CD8-positive, alpha-beta T cell (primary cell): ENCODE measurements at regions of chr5 and their contacts with region 1.

Region 1: GRCh38 chr5:168579488-168580226 is 489 bp upstream of the PANK3 start:
- DNase-seq: peak; percentile 94 to 99 (median 97)
- ATAC-seq: peak; percentile 97
- H3K4me3 ChIP-seq: peak overlapping the region; percentile 60 to 74
- H3K4me3 Mint-ChIP-seq: peak overlapping the region; percentile 89
- H3K27ac ChIP-seq: peak overlapping the region; percentile 45 to 96
- H3K27ac Mint-ChIP-seq: peak overlapping the region; percentile 96
- H3K4me1 ChIP-seq: peaks cover 26% of the 10 kb centered on the region
- H3K4me1 Mint-ChIP-seq: peaks cover 41% of the 10 kb centered on the region
- H3K27me3 ChIP-seq: no peaks in the 10 kb centered on the region
- H3K27me3 Mint-ChIP-seq: peaks cover 2% of the 10 kb centered on the region
- CTCF ChIP-seq: no peak

Region 2: DNA sequence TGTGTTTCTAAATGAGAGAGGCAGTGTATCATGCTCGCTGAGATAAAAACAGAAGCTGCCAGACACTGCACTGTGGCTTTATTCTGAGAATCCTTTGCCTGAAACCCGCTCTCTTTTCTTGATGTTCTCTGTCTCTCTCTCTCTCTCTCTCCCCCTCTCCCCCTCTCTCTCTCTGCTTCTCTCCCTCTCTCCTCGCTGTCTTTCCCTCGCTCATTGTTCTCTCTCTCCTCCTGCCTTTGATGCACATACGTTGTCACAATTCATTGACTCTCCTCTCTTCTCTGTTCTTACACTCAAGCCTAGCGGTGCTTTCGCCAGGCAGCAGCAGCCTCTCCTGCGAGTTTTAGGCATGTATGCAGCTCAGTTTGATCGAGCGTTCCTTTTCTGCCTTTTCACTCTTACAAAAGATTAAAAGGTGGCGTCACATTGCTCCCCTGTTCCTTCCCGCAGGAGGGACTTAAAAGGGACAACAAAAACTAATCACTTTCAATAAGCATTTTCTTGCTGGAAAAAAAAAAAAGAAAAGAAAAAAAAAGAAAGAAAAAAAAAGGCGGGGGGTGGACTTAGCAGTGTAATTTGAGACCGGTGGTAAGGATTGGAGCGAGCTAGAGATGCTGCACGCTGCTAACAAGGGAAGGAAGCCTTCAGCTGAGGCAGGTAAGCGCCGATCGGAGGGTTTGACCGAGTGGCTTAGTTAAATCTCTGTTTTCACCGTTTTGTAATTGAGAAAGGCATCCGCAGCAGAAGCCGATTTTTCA is 1006.1 kb before region 1 on chr5:
- CTCF ChIA-PET with region 1: no interaction called
- POLR2A ChIA-PET with region 1: no interaction called
- intact Hi-C with region 1: no loop called
- DNase-seq: no peak
- ATAC-seq: no peak
- H3K4me3 ChIP-seq: no peak overlapping the region
- H3K4me3 Mint-ChIP-seq: no peak overlapping the region
- H3K27ac ChIP-seq: no peak overlapping the region
- H3K27ac Mint-ChIP-seq: no peak overlapping the region
- H3K4me1 ChIP-seq: no peaks in the 10 kb centered on the region
- H3K4me1 Mint-ChIP-seq: peaks cover 9% of the 10 kb centered on the region
- H3K27me3 ChIP-seq: peaks cover 0 to 3% of the 10 kb centered on the region in 2 experiments
- H3K27me3 Mint-ChIP-seq: peaks cover 6% of the 10 kb centered on the region
- CTCF ChIP-seq: no peak

Region 3: GRCh38 chr5:168486136-168486879 is 93.3 kb before region 1 on chr5 and contains the start of gene RARS1:
- CTCF ChIA-PET with region 1: interaction called, 3 read pairs
- POLR2A ChIA-PET with region 1: interaction called, 10 read pairs
- intact Hi-C with region 1: loop called (anchors 1 to 2 kb)
- DNase-seq: peak; percentile 73 to 94 (median 88)
- ATAC-seq: peak; percentile 89
- H3K4me3 ChIP-seq: peak within 1 kb of the TSS; percentile 94 to 96
- H3K4me3 Mint-ChIP-seq: peak within 1 kb of the TSS; percentile 100
- H3K27ac ChIP-seq: peak within 1 kb of the TSS; percentile 71 to 79
- H3K27ac Mint-ChIP-seq: peak within 1 kb of the TSS; percentile 96
- H3K4me1 ChIP-seq: peaks cover 15% of the 10 kb centered on the region
- H3K4me1 Mint-ChIP-seq: peaks cover 37% of the 10 kb centered on the region
- H3K27me3 ChIP-seq: no peaks in the 10 kb centered on the region
- H3K27me3 Mint-ChIP-seq: peaks cover 5% of the 10 kb centered on the region
- CTCF ChIP-seq: peak; percentile 96
- total RNA-seq, gene RARS1: 80.2 to 91.9 TPM

Region 4: GRCh38 chr5:168612996-168613395 is 33.3 kb after region 1 on chr5:
- CTCF ChIA-PET with region 1: no interaction called
- POLR2A ChIA-PET with region 1: interaction called, 13 read pairs
- intact Hi-C with region 1: loop called (anchors 2 kb)
- DNase-seq: peak in 2 of 9 experiments; percentile 64 to 75
- ATAC-seq: peak; percentile 99
- H3K4me3 ChIP-seq: no peak overlapping the region
- H3K4me3 Mint-ChIP-seq: peak overlapping the region; percentile 50
- H3K27ac ChIP-seq: peak overlapping the region in 1 of 2 experiments; percentile 51
- H3K27ac Mint-ChIP-seq: peak overlapping the region; percentile 78
- H3K4me1 ChIP-seq: peaks cover 8% of the 10 kb centered on the region
- H3K4me1 Mint-ChIP-seq: peaks cover 10% of the 10 kb centered on the region
- H3K27me3 ChIP-seq: no peaks in the 10 kb centered on the region
- H3K27me3 Mint-ChIP-seq: no peaks in the 10 kb centered on the region
- CTCF ChIP-seq: no peak